Cardiac septum (tissue), 1 donor: ENCODE measurements at regions of chr3 and their contacts with region 1.

Region 1: GRCh38 chr3:9067352-9067975 is 104.2 kb upstream of the RAD18 start:
- DNase-seq: no peak

Region 2: DNA sequence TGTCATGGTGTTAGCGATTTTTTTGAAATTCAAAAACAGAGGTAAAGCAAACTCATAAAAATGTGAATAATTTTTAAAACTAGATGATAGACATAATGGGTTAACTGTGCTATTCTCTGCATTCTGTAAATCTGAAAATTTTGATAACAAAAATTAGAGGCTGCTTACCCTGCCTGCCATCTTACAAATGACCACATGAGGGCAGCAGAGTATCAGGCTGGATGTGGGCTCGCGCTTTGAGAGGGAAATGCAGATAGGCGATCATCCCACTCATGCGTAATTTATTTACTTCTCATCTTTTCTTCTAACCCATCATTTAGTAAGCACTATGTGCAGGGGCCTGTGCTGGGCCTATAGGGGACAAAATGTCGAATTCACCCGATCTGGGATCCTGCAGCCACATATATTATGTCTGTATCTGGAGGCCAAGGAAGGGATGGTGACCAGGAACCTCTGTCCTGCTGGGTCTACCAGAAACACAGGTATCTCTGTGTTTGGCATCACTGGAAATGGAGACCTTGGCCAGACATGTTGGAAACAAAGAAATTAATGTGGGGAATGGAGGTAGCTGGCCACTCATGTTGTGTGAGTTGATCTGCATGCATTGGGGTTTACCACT is 96.4 kb before region 1 on chr3:
- intact Hi-C with region 1: loop called (anchors 5 kb)
- DNase-seq: no peak

Region 3: DNA sequence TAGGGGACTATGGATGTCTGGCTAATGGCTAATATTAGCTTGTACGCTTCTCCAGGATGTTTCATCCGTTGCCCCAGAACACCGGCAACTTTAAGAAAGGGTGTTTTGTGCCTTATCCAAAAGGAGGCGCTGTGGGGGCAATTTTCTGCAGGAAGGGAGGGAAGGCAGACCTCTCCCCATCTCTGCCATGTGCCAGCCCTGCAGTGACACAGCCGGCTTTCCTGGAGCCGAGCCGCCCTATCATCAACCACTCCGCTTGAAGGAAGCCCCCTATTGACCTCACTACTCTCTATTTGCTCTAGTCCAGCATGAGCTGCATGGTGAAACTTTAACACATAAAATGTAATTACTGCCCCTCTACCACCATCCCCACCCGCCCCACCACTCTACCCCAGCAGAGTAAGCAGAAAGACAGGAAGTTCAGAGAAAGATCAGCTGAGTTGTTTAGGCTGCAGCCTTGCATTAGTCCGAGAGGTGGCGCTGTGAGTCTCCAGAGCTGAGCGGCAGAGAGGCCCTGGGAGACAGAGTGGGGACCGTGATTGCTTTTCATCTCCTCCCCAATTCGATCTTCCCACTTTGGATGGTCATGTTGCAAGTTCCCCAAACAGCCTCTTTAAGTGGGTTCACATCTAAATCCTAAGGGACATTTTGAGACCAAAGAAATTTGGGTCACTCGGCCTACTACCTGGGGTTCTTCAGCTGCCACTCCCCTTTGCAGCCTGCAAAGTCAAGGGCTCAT is 79.7 kb before region 1 on chr3:
- intact Hi-C with region 1: loop called (anchors 2 kb)
- DNase-seq: no peak

Region 4: DNA sequence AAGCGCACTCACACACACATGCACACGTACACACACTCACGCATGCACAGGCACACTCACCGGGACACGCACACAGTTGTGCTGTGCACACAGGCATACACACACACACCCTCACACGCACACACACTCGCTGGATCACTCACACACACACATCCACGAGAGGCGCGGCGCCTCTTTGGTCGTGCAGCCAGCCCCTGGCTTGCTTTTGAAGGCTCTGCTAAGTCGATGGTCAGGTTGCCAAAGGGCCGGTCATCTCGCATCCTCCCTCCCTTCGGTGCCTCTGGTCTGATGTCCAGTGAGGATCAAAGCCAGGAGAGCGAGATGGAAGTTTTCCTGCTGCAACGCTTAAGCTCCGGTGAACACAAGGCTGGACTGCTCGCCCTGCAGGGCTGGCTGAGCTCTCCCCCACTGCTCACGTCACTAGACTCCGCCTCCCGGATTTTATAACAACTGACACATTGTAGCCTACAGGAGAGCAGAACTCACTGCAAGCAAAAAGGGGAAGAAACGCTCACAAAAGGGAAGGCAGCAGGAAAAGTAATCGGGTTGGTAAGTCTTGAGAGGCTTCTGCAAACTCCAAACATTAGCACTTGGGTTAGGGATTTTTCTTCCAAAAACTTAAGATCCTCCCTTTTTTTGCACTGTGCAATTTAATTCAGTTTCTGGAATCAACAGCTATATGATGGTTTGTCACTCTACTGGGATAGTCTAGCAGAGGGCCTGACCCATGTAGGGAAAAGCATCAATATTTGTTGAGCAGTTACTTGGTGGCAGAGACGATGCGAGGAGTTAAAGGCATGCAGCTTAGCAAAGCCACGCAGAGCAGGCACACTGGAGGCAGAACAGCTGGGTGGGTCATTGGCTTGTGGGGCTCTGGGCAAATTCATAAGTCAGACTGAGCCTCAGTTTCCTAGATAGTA is 182.1 kb after region 1 on chr3 and contains the start of gene SRGAP3:
- intact Hi-C with region 1: loop called (anchors 2 kb)
- DNase-seq: peak; percentile 88
- total RNA-seq, gene SRGAP3: 10.1 TPM